Activated CD4-positive, alpha-beta memory T cell treated with anti-CD3 and anti-CD28 coated beads, Interleukin-2, amount 10 ng/mL, durations not matched to agents 7 days and 5 days (primary cell): ENCODE measurements at regions of chr9 and their contacts with region 1.

Region 1: GRCh38 chr9:98255578-98256296 is at the start of gene TBC1D2:
- DNase-seq: peak; percentile 98
- H3K4me3 Mint-ChIP-seq: peak within 1 kb of the TSS; percentile 93
- H3K27ac Mint-ChIP-seq: peak within 1 kb of the TSS; percentile 99
- H3K4me1 Mint-ChIP-seq: peaks cover 43% of the 10 kb centered on the region
- H3K27me3 Mint-ChIP-seq: no peaks in the 10 kb centered on the region
- total RNA-seq, gene TBC1D2: 11.0 to 11.9 TPM

Region 2: GRCh38 chr9:98056269-98057137 is 199.2 kb before region 1 on chr9 and contains the start of gene NANS:
- CTCF ChIA-PET with region 1: interaction called, 19 read pairs
- POLR2A ChIA-PET with region 1: interaction called, 41 read pairs
- DNase-seq: peak; percentile 94
- H3K4me3 Mint-ChIP-seq: peak within 1 kb of the TSS; percentile 97
- H3K27ac Mint-ChIP-seq: peak within 1 kb of the TSS; percentile 92
- H3K4me1 Mint-ChIP-seq: peaks cover 37% of the 10 kb centered on the region
- H3K27me3 Mint-ChIP-seq: no peaks in the 10 kb centered on the region
- total RNA-seq, gene NANS: 46.1 to 47.3 TPM

Region 3: GRCh38 chr9:98101868-98102273 is 153.9 kb before region 1 on chr9:
- CTCF ChIA-PET with region 1: interaction called, 13 read pairs
- POLR2A ChIA-PET with region 1: interaction called, 39 read pairs
- DNase-seq: peak; percentile 90
- H3K4me3 Mint-ChIP-seq: peak overlapping the region; percentile 70
- H3K27ac Mint-ChIP-seq: peak overlapping the region; percentile 97
- H3K4me1 Mint-ChIP-seq: peaks cover 87% of the 10 kb centered on the region
- H3K27me3 Mint-ChIP-seq: no peaks in the 10 kb centered on the region

Region 4: DNA sequence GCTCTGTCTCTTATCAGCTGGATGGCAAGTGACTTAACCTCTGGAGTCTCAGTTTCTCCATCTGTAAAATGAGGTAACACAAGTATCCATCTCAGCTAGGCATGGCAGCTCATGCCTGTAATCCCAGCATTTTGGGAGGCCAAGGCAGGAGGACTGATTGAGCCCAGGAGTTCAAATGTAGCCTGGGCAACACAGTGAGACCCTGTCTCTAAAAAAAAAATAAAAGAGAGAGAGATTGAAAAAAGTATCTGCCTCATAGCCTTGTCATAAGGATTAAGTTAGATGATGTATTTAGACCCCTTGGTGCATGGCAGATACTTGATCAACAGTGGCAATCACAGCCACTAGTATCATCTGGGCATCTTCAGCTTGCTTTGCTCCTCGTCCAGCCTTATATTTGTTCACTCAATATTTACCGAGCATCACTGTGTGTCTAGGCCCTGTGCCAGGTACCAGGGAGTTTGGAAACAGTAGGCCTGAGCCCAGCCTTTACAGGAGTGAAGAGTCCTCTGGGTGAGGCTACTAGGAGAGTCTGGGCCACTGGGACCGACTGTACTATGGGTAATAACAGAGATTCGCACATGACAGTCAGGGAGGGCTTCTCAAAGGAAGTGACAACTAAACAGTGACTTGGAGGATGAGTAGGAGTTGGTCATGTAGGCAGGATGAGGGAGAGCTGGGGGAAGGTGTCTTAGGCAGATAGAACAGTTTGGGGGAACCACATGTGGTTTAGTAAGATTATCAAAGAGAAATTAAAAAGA is 97.5 kb before region 1 on chr9:
- CTCF ChIA-PET with region 1: no interaction called
- POLR2A ChIA-PET with region 1: no interaction called
- DNase-seq: no peak
- H3K4me3 Mint-ChIP-seq: no peak overlapping the region
- H3K27ac Mint-ChIP-seq: no peak overlapping the region
- H3K4me1 Mint-ChIP-seq: peaks cover 8% of the 10 kb centered on the region
- H3K27me3 Mint-ChIP-seq: no peaks in the 10 kb centered on the region

Region 5: GRCh38 chr9:98207606-98208005 is 48.1 kb before region 1 on chr9:
- CTCF ChIA-PET with region 1: interaction called, 28 read pairs
- POLR2A ChIA-PET with region 1: interaction called, 40 read pairs
- DNase-seq: no peak
- H3K4me3 Mint-ChIP-seq: no peak overlapping the region
- H3K27ac Mint-ChIP-seq: no peak overlapping the region
- H3K4me1 Mint-ChIP-seq: peaks cover 3% of the 10 kb centered on the region
- H3K27me3 Mint-ChIP-seq: no peaks in the 10 kb centered on the region